Lower lobe of right lung (tissue), 2 donors: ENCODE measurements at regions of chr5 and their contacts with region 1.

Region 1: GRCh38 chr5:140073296-140073695 is 30.2 kb upstream of the NRG2 start:
- DNase-seq: no peak
- ATAC-seq: no peak
- H3K4me3 ChIP-seq: no peak overlapping the region
- H3K27ac ChIP-seq: no peak overlapping the region
- H3K4me1 ChIP-seq: peaks cover 9% of the 10 kb centered on the region
- H3K27me3 ChIP-seq: no peaks in the 10 kb centered on the region
- CTCF ChIP-seq: peak; percentile 71

Region 2: GRCh38 chr5:140020601-140021177 is 52.6 kb before region 1 on chr5:
- intact Hi-C with region 1: no loop called
- DNase-seq: no peak
- ATAC-seq: peak; percentile 29 to 41
- H3K4me3 ChIP-seq: no peak overlapping the region
- H3K27ac ChIP-seq: no peak overlapping the region
- H3K4me1 ChIP-seq: no peaks in the 10 kb centered on the region
- H3K27me3 ChIP-seq: no peaks in the 10 kb centered on the region
- CTCF ChIP-seq: no peak

Region 3: GRCh38 chr5:140157032-140157803 is 83.9 kb after region 1 on chr5:
- intact Hi-C with region 1: loop called (anchors 5 kb)
- DNase-seq: peak; percentile 92
- ATAC-seq: peak; percentile 95 to 96
- H3K4me3 ChIP-seq: peak overlapping the region; percentile 44
- H3K27ac ChIP-seq: peak overlapping the region; percentile 52
- H3K4me1 ChIP-seq: peaks cover 39% of the 10 kb centered on the region
- H3K27me3 ChIP-seq: no peaks in the 10 kb centered on the region
- CTCF ChIP-seq: peak; percentile 89